ENCODE measurements at regions of chr12 and their contacts with region 1.

Region 1: DNA sequence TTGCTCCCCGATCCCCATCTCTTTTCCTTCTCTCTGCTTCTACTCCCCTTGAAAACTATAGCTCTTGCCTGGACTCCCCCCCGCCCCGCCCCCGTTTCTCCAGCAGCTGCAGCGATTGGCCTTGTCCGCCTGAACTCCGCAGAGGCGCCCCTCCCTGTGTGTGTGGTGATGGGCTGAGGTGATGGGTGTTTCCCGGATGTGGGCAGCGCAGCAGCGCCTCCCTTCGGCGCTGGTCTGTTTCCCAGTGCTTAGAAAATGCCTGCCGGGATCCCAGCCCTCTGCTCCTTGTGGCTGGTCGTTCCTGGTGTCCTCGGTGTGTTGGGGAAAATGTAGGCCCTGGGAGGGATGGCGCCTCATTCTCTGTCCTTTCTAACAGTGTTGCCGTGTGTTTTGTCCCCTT is 43.3 kb downstream of the GALNT8 start:
- DNase-seq: no peak
- ATAC-seq: no peak
- H3K4me3 ChIP-seq: no peak overlapping the region
- H3K27ac ChIP-seq: no peak overlapping the region
- H3K4me1 ChIP-seq: peaks cover 0 to 27% (median 12%) of the 10 kb centered on the region in 12 donors
- H3K27me3 ChIP-seq: no peaks in the 10 kb centered on the region
- CTCF ChIP-seq: no peak
- POLR2A ChIP-seq: no peak

Region 2: GRCh38 chr12:4307593-4308333 is 455.8 kb before region 1 on chr12:
- intact Hi-C with region 1: loop called in 2 of 10 experiments (anchors 5 kb)
- DNase-seq: peak in 4 of 5 donors; percentile 69 to 77 (median 72)
- ATAC-seq: peak; percentile 75 to 89 (median 86)
- H3K4me3 ChIP-seq: peak overlapping the region in 3 of 12 donors; percentile 10 to 32 (median 15)
- H3K27ac ChIP-seq: peak overlapping the region in 10 of 12 donors; percentile 17 to 72 (median 41)
- H3K4me1 ChIP-seq: peaks cover 3 to 54% (median 30%) of the 10 kb centered on the region in 12 donors
- H3K27me3 ChIP-seq: no peaks in the 10 kb centered on the region
- CTCF ChIP-seq: peak; percentile 56 to 80 (median 68)
- POLR2A ChIP-seq: no peak

Region 3: DNA sequence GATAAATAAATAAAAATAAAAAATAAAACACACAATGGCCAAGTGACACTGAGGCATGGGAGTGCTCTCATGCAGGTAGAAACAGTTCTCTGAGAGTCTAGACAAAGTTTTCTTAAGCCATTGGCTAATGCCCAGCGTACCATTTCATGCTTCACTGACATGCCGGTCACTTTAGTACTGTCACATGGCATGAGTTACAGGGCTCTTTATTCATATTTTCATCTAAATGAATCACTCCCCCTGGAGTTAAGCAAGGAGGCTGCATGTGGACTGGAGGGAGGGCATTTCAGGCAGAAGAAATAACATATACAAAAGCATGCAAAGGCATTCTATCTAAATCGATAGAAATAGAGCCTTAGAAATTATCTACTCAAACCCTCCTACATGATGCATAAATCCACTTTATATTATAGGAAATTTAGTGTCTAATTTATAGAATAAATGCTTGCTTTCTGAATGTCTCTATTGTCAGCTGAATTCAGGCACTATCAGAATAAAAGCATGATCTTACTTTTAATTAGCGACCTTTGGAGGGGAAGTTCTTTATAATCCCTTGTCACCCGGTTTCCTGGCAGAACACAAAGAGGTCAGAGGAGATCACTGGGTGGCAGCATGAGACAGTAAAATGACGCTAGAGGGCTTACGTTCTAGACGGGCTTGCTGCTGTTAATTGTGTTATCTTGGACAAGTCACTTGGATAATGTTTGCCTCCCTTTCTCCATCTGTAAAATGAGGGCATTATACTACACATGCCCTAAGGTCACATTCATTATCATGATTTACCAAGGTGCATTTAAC is 184.0 kb before region 1 on chr12:
- intact Hi-C with region 1: loop called in 3 of 10 experiments (anchors 5 to 10 kb)
- DNase-seq: no peak
- ATAC-seq: peak in 1 of 4 donors; percentile 44
- H3K4me3 ChIP-seq: no peak overlapping the region
- H3K27ac ChIP-seq: peak overlapping the region in 1 of 12 donors; percentile 2
- H3K4me1 ChIP-seq: peaks cover 0 to 4% (median 0%) of the 10 kb centered on the region in 12 donors
- H3K27me3 ChIP-seq: no peaks in the 10 kb centered on the region
- CTCF ChIP-seq: peak in 4 of 12 donors; percentile 13 to 35 (median 28)
- POLR2A ChIP-seq: no peak

Region 4: DNA sequence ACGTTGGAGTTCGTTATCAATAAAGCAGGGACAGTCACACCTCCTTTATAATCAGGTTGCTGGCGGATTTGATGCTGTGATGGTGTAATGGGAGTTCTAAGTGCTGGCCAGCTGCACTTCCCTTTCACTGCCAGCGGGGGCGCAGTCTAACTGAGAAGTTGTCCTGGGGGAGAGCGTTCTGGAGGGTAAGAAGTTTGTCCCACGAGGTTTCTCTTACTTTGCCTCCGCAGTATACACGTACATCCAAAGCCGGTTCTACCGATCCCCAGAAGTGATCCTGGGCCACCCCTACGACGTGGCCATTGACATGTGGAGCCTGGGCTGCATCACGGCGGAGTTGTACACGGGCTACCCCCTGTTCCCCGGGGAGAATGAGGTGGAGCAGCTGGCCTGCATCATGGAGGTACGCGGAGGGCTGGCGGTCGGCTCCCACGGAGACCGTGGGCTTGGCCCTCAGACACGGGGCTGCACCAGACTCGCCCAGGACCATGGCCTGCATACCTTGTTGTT is 158.8 kb before region 1 on chr12:
- intact Hi-C with region 1: loop called in 4 of 10 experiments (anchors 2 to 10 kb)
- DNase-seq: peak; percentile 76 to 81 (median 79)
- ATAC-seq: peak; percentile 86 to 98 (median 98)
- H3K4me3 ChIP-seq: peak overlapping the region; percentile 52 to 86 (median 70)
- H3K27ac ChIP-seq: peak overlapping the region in 10 of 12 donors; percentile 35 to 79 (median 72)
- H3K4me1 ChIP-seq: peaks cover 0 to 27% (median 10%) of the 10 kb centered on the region in 12 donors
- H3K27me3 ChIP-seq: no peaks in the 10 kb centered on the region
- CTCF ChIP-seq: peak; percentile 92 to 99 (median 96)
- POLR2A ChIP-seq: peak in 1 of 2 donors; percentile 20

Region 5: GRCh38 chr12:4648501-4649357 is 114.8 kb before region 1 on chr12 and contains the starts of genes AKAP3 and NDUFA9:
- intact Hi-C with region 1: no loop called
- DNase-seq: peak; percentile 83 to 88 (median 86)
- ATAC-seq: peak; percentile 95 to 99 (median 98)
- H3K4me3 ChIP-seq: peak within 1 kb of the TSS; percentile 47 to 96 (median 76)
- H3K27ac ChIP-seq: peak within 1 kb of the TSS; percentile 81 to 90 (median 86)
- H3K4me1 ChIP-seq: peaks cover 8 to 46% (median 36%) of the 10 kb centered on the region in 12 donors
- H3K27me3 ChIP-seq: no peaks in the 10 kb centered on the region
- CTCF ChIP-seq: no peak
- POLR2A ChIP-seq: peak in 1 of 2 donors; percentile 42
- total RNA-seq, gene AKAP3: 2.3 to 4.0 (median 3.2) TPM
- total RNA-seq, gene NDUFA9: 59.2 to 333 (median 270) TPM

Region 6: GRCh38 chr12:4685317-4685716 is 78.2 kb before region 1 on chr12:
- intact Hi-C with region 1: loop called in 1 of 10 experiments (anchors 10 kb)
- DNase-seq: no peak
- ATAC-seq: peak in 2 of 4 donors; percentile 42 to 50
- H3K4me3 ChIP-seq: no peak overlapping the region
- H3K27ac ChIP-seq: no peak overlapping the region
- H3K4me1 ChIP-seq: no peaks in the 10 kb centered on the region
- H3K27me3 ChIP-seq: no peaks in the 10 kb centered on the region
- CTCF ChIP-seq: no peak
- POLR2A ChIP-seq: no peak

Region 7: GRCh38 chr12:4809013-4809448 is 45.5 kb after region 1 on chr12:
- intact Hi-C with region 1: no loop called
- DNase-seq: peak in 1 of 5 donors; percentile 30
- ATAC-seq: peak in 2 of 4 donors; percentile 31 to 49
- H3K4me3 ChIP-seq: peak overlapping the region; percentile 30 to 62 (median 50)
- H3K27ac ChIP-seq: peak overlapping the region in 1 of 12 donors; percentile 9
- H3K4me1 ChIP-seq: peaks cover 0 to 16% (median 11%) of the 10 kb centered on the region in 12 donors
- H3K27me3 ChIP-seq: peaks cover 0 to 49% (median 24%) of the 10 kb centered on the region in 9 donors
- CTCF ChIP-seq: no peak
- POLR2A ChIP-seq: no peak

Measured in heart left ventricle (tissue), 16 donors.